ENCODE measurements at regions of chr10 and their contacts with region 1.

Region 1: DNA sequence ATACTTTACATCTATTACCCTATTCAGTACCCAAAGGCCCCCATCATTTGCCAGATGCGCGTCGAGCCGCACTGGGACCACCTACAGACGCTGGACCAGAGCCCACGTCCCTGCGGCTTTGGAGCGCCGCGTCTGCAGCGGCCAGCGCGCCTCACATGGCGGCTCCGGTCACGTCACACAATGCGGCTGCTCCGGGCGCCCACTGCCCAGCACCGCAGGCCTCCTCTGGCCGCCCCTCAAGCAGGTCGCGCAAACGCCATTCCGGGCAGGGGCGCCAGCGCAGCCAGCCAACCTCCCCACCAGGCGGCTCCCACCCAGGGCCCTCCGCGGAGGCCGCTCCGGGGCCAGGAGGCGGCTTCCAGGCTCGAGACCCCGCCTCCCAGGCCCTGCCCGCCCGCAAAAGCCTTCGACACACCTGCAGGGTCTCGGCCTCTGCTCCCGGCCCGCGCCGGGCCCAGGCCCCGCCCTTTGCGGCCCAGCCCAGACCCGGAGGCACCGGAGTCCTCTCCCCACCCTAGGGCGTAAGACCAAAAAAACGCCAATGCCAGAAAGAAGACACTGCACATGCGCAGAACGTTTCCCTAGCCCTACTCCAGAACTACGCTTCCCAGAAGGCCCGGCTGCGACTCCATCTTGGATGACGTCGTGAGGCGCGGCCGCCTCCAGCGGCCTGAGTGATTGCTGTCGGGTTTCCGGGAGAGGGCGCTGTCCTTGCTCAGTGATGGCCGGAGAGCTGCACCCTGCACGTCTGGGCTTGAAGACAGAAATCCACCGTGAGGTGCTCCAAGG is at the start of gene ZNF25:
- DNase-seq: peak; percentile 98 to 99 (median 98)
- H3K4me3 ChIP-seq: peak within 1 kb of the TSS; percentile 63 to 86 (median 63)
- H3K4me3 Mint-ChIP-seq: peak within 1 kb of the TSS; percentile 89 to 95
- H3K27ac ChIP-seq: peak within 1 kb of the TSS; percentile 52 to 93
- H3K27ac Mint-ChIP-seq: peak within 1 kb of the TSS; percentile 89 to 96 (median 92)
- H3K4me1 ChIP-seq: peaks cover 7 to 15% of the 10 kb centered on the region in 2 donors
- H3K4me1 Mint-ChIP-seq: peaks cover 20% of the 10 kb centered on the region
- H3K27me3 ChIP-seq: no peaks in the 10 kb centered on the region
- H3K27me3 Mint-ChIP-seq: peaks cover 0 to 3% (median 0%) of the 10 kb centered on the region in 3 donors
- CTCF ChIP-seq: peak; percentile 88
- polyA plus RNA-seq, gene ZNF25: 5.5 to 6.7 (median 6.2) TPM

Region 2: DNA sequence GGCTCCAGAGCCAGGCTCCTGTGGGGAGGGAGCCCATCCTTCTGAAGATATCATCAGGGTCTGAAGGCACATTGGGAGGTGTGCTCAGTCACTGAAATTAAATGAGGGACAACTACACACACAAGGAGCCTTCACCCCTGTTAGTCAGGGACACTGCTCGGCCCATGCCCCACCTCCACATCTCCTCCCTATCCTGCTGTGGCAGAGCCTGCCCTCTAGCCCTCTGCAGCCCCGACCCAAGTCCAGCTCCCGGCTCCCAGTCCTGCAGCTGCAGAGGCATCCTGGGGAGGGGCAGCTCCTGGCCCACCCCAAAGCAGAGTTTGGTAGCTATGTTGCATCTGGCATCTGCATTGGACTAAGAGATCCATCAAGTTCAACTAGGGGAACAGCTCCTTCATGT is 255.2 kb before region 1 on chr10:
- intact Hi-C with region 1: no loop called
- DNase-seq: no peak
- H3K4me3 ChIP-seq: no peak overlapping the region
- H3K4me3 Mint-ChIP-seq: no peak overlapping the region
- H3K27ac ChIP-seq: no peak overlapping the region
- H3K27ac Mint-ChIP-seq: no peak overlapping the region
- H3K4me1 ChIP-seq: no peaks in the 10 kb centered on the region
- H3K4me1 Mint-ChIP-seq: no peaks in the 10 kb centered on the region
- H3K27me3 ChIP-seq: no peaks in the 10 kb centered on the region
- H3K27me3 Mint-ChIP-seq: peaks cover 0 to 3% (median 0%) of the 10 kb centered on the region in 3 donors
- CTCF ChIP-seq: no peak

Region 3: DNA sequence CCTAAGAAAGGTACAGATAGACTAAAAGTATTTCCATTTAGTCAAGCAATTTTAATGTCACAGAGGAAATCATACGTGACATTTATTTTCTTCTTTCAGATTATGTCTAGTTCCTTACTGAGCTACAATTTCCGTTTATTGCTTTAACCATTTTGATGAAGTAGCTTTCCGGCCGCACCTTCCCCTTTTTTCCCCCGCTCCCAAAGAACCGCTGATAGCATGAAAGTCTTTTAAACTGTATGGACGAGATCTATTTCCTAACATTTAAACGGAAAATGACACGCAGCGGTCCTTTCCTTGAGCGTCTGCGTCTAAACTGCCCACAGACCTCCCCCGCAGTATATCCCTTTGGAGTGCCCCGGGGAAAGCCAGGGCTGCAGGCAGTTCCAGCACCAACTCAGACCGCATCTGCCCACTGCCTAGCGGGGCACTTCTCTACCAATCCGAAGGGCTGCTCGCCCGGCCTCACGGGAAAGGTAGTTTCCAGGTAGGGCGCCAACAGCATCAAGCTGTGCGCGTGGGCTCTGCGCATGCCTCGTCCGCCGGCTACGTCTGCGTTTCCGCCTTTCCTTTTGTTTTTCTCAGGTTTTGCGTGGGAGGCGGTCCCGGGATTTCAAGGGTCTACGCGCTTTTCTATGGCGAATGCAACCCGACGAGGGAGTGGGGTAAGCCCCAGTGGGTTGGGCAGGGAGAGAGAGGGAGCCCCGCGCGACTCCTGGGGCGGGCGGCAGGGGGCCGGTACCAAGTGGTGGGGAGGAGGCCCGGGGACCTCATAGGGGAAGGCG is 34.0 kb after region 1 on chr10 and contains the start of gene ZNF33A:
- intact Hi-C with region 1: loop called (anchors 2 to 5 kb)
- DNase-seq: peak; percentile 69 to 83 (median 82)
- H3K4me3 ChIP-seq: peak within 1 kb of the TSS; percentile 67 to 96 (median 92)
- H3K4me3 Mint-ChIP-seq: peak within 1 kb of the TSS; percentile 92 to 96
- H3K27ac ChIP-seq: peak within 1 kb of the TSS; percentile 99
- H3K27ac Mint-ChIP-seq: peak within 1 kb of the TSS; percentile 96 to 99 (median 98)
- H3K4me1 ChIP-seq: peaks cover 26 to 34% of the 10 kb centered on the region in 2 donors
- H3K4me1 Mint-ChIP-seq: peaks cover 32% of the 10 kb centered on the region
- H3K27me3 ChIP-seq: no peaks in the 10 kb centered on the region
- H3K27me3 Mint-ChIP-seq: peaks cover 0 to 3% (median 0%) of the 10 kb centered on the region in 3 donors
- CTCF ChIP-seq: no peak
- polyA plus RNA-seq, gene ZNF33A: 10.0 to 24.8 (median 10.3) TPM